AG04449 (cell line): ENCODE measurements at regions of chr17 and their contacts with region 1.

Region 1: GRCh38 chr17:44210342-44211192 is 8.9 kb downstream of the UBTF start:
- DNase-seq: no peak
- H3K4me3 ChIP-seq: no peak overlapping the region
- CTCF ChIP-seq: peak; percentile 100

Region 2: GRCh38 chr17:44199553-44200477 is 10.8 kb before region 1 on chr17 and contains the start of gene ATXN7L3:
- CTCF ChIA-PET with region 1: interaction called, 72 read pairs
- POLR2A ChIA-PET with region 1: no interaction called
- DNase-seq: peak; percentile 81
- H3K4me3 ChIP-seq: peak within 1 kb of the TSS; percentile 79
- CTCF ChIP-seq: no peak

Region 3: GRCh38 chr17:44235583-44235936 is 25.0 kb after region 1 on chr17:
- CTCF ChIA-PET with region 1: no interaction called
- POLR2A ChIA-PET with region 1: no interaction called
- DNase-seq: no peak
- H3K4me3 ChIP-seq: no peak overlapping the region
- CTCF ChIP-seq: no peak

Region 4: GRCh38 chr17:44324571-44325275 is 114.2 kb after region 1 on chr17 and contains the start of gene SLC25A39:
- CTCF ChIA-PET with region 1: interaction called, 130 read pairs
- POLR2A ChIA-PET with region 1: no interaction called
- DNase-seq: no peak
- H3K4me3 ChIP-seq: peak within 1 kb of the TSS; percentile 85
- CTCF ChIP-seq: no peak

Region 5: DNA sequence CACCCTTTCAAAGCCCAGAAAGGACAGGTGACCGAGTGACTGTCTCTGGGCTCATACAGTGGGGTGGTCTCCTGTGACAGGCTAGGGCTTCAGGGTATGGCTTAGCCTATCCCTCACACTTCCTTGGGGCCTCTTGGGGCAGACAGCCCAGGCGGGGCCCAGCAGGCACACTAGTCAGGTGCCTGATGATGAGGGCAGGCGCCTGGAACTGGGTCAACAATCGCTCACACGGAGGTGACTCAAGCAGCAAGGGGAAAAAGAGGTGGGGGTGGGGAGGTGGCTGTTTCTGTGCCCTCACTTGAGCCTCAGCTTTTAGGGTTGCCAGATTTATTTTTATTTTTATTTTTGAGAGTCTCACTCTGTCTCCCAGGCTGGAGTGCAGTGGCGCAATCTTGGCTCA is 128.1 kb after region 1 on chr17:
- CTCF ChIA-PET with region 1: interaction called, 130 read pairs
- POLR2A ChIA-PET with region 1: no interaction called
- DNase-seq: no peak
- H3K4me3 ChIP-seq: no peak overlapping the region
- CTCF ChIP-seq: no peak

Region 6: DNA sequence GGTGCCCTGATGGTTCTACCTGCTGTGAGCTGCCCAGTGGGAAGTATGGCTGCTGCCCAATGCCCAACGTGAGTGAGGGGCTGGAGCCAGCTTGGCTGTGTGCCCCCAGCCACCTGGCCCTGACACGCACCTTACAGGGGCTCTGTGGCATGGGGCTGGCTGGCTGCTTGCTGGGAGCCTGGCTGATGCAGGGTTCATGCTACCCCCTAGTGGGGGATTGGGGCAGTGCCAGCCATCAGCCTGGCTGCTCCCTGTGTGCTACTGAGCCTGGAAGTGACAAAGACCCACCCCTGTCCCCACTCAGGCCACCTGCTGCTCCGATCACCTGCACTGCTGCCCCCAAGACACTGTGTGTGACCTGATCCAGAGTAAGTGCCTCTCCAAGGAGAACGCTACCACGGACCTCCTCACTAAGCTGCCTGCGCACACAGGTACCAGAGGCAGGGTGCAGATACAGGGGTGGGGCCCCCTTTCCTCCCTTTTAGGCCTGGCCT is 140.2 kb after region 1 on chr17:
- CTCF ChIA-PET with region 1: interaction called, 31 read pairs
- POLR2A ChIA-PET with region 1: interaction called, 3 read pairs
- DNase-seq: no peak
- H3K4me3 ChIP-seq: no peak overlapping the region
- CTCF ChIP-seq: peak; percentile 87